ENCODE measurements at regions of chr2 and their contacts with region 1.

Region 1: DNA sequence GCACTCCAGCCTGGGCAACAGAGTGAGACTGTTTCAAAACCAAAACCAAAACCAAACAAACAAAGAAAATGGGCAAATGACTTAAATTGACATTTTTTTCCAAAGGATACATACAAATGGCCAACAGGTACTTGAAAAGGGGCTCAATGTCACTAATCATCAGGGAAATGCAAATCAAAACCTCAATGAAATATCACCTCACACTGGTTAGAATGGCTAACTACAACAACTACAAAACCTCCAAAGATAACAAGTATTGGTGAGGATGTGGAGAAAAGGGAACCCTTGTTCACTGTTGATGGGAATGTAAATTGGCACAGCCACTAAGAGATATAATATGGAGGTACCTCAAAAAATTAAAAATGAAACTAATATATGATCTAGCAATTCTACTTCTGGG is 213.2 kb upstream of the HS6ST1 start:
- DNase-seq: no peak
- ATAC-seq: no peak
- H3K4me3 ChIP-seq: no peak overlapping the region
- H3K4me3 Mint-ChIP-seq: no peak overlapping the region
- H3K27ac ChIP-seq: no peak overlapping the region
- H3K27ac Mint-ChIP-seq: no peak overlapping the region
- H3K4me1 ChIP-seq: no peaks in the 10 kb centered on the region
- H3K4me1 Mint-ChIP-seq: peaks cover 0 to 14% (median 0%) of the 10 kb centered on the region in 7 donors
- H3K27me3 ChIP-seq: no peaks in the 10 kb centered on the region
- H3K27me3 Mint-ChIP-seq: peaks cover 0 to 23% (median 9%) of the 10 kb centered on the region in 5 donors

Region 2: DNA sequence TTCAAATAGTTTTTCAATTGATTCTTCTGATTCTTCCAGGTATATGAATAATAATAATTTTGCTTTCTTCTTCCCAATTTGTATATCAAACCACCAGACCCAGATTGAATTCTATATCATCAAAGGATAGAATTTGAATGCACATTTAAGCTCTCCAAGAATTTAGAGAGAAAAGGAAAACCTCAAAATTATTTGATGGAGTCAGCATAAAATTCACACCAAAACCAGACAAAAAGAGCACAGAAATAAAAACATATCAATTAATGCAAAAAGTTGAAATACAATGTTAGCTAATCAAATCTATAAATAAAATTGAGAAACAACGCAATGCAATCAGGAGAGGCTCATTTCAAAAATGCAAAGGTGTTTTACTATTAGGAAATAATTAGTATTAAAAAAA is 34.8 kb after region 1 on chr2:
- CTCF ChIA-PET with region 1: no interaction called
- POLR2A ChIA-PET with region 1: no interaction called
- intact Hi-C with region 1: loop called in 1 of 2 experiments (anchors 1 kb)
- DNase-seq: no peak
- ATAC-seq: no peak
- H3K4me3 ChIP-seq: no peak overlapping the region
- H3K4me3 Mint-ChIP-seq: no peak overlapping the region
- H3K27ac ChIP-seq: no peak overlapping the region
- H3K27ac Mint-ChIP-seq: no peak overlapping the region
- H3K4me1 ChIP-seq: no peaks in the 10 kb centered on the region
- H3K4me1 Mint-ChIP-seq: no peaks in the 10 kb centered on the region
- H3K27me3 ChIP-seq: no peaks in the 10 kb centered on the region
- H3K27me3 Mint-ChIP-seq: peaks cover 0 to 11% (median 2%) of the 10 kb centered on the region in 5 donors

Measured in naive thymus-derived CD4-positive, alpha-beta T cell (primary cell).